A549 (cell line): ENCODE measurements at regions of chr3 and their contacts with region 1.

Region 1: DNA sequence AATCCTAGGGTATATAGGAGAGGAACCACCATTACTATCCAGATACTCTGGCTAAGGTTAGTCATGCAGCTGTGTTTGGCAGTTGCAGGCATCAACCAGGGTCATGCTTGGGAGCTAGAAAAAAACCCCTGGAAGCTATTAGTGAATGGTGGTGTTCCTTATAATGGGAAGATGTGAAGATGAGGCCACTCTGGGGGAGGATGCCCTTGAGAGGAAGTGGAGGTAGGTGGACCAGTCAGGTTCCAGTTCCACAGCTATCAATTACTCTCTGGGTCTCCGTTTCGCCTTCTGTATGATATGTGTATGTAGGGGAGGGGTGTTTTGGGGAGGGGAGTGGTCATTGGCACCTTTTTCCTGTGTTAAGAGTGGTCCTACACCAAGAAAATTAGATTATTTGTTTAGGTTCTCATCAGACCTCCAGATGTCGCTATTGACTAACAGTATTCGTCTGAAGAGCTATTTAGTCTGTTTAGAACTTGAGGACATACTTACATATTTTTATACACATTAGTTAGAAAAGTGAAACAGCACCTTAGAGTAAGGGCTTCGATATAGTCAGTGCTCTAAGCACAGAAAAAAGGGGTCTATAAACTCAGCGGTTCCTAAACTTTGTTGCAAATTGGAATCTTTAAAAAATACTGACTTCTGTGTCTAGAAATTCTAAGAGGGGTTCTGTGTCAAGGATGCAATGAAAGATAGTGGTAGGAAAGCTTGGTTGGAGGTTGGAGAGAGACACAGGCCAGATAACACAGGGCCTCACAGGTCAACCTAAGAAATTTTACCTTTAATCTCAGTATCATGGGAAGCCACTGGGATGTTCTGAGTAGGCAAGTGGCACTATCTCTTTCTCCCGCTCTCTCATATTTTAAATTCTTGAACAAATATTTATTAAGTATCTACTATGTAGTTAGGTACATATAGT is 9.1 kb upstream of the HPS3 start:
- DNase-seq: peak; percentile 73 to 80
- ATAC-seq: peak; percentile 83 to 95
- H3K4me3 ChIP-seq: no peak overlapping the region
- H3K27ac ChIP-seq: peak overlapping the region; percentile 61 to 73
- H3K4me1 ChIP-seq: peaks cover 12% of the 10 kb centered on the region
- CTCF ChIP-seq: peak; percentile 94
- EP300 ChIP-seq: no peak
- POLR2A ChIP-seq: no peak
- RAD21 ChIP-seq: peak; percentile 95 to 97

Region 2: GRCh38 chr3:148880681-148881080 is 239.6 kb before region 1 on chr3:
- CTCF ChIA-PET with region 1: no interaction called
- POLR2A ChIA-PET with region 1: no interaction called
- DNase-seq: peak; percentile 28 to 47
- ATAC-seq: peak; percentile 54 to 72; a peak in 4 of 6 replicates
- H3K4me3 ChIP-seq: no peak overlapping the region
- H3K27ac ChIP-seq: no peak overlapping the region
- H3K4me1 ChIP-seq: no peaks in the 10 kb centered on the region
- CTCF ChIP-seq: peak; percentile 29
- EP300 ChIP-seq: no peak
- POLR2A ChIP-seq: no peak
- RAD21 ChIP-seq: peak; percentile 48 to 65; a peak in 4 of 5 replicates

Region 3: GRCh38 chr3:148955544-148956346 is 164.6 kb before region 1 on chr3:
- CTCF ChIA-PET with region 1: interaction called, 16 read pairs
- POLR2A ChIA-PET with region 1: no interaction called
- DNase-seq: peak; percentile 19 to 72
- ATAC-seq: peak; percentile 76 to 88
- H3K4me3 ChIP-seq: no peak overlapping the region
- H3K27ac ChIP-seq: peak overlapping the region; percentile 7 to 53; a peak in 4 of 6 replicates
- H3K4me1 ChIP-seq: peaks cover 5% of the 10 kb centered on the region; the same call in 2 of the 3 replicates
- CTCF ChIP-seq: peak; percentile 89
- EP300 ChIP-seq: no peak
- POLR2A ChIP-seq: no peak
- RAD21 ChIP-seq: peak; percentile 89 to 93

Region 4: DNA sequence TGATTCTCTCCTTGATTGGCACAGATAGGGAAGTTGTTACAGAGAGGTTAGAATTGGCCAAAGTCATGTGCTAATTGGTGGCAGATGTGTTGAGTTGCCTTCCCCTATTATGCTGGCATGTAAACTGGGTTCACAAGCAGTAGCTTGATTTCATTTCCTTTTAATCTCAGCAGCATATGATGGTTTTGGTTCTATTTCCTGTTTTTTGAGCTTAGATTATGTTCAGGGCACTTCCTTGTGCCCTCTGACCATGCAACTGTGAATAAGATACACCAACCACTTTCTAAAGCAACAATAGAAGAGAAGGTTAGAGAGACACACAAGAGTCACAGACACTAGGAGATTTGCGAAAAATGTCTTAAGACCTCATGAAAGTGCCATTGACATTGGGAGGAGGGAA is 25.7 kb after region 1 on chr3:
- CTCF ChIA-PET with region 1: interaction called, 13 read pairs
- POLR2A ChIA-PET with region 1: no interaction called
- DNase-seq: no peak
- ATAC-seq: no peak
- H3K4me3 ChIP-seq: no peak overlapping the region
- H3K27ac ChIP-seq: no peak overlapping the region
- H3K4me1 ChIP-seq: no peaks in the 10 kb centered on the region
- CTCF ChIP-seq: no peak
- EP300 ChIP-seq: no peak
- POLR2A ChIP-seq: no peak
- RAD21 ChIP-seq: no peak

Region 5: GRCh38 chr3:149267565-149267964 is 147.3 kb after region 1 on chr3:
- CTCF ChIA-PET with region 1: interaction called, 114 read pairs
- POLR2A ChIA-PET with region 1: no interaction called
- DNase-seq: no peak
- ATAC-seq: no peak
- H3K4me3 ChIP-seq: no peak overlapping the region
- H3K27ac ChIP-seq: no peak overlapping the region
- H3K4me1 ChIP-seq: no peaks in the 10 kb centered on the region
- CTCF ChIP-seq: no peak
- EP300 ChIP-seq: no peak
- POLR2A ChIP-seq: no peak
- RAD21 ChIP-seq: no peak

Region 6: GRCh38 chr3:149299938-149300791 is 179.9 kb after region 1 on chr3:
- CTCF ChIA-PET with region 1: interaction called, 17 read pairs
- POLR2A ChIA-PET with region 1: no interaction called
- DNase-seq: peak; percentile 65 to 98
- ATAC-seq: peak; percentile 91
- H3K4me3 ChIP-seq: no peak overlapping the region
- H3K27ac ChIP-seq: peak overlapping the region; percentile 91 to 95
- H3K4me1 ChIP-seq: peaks cover 49% of the 10 kb centered on the region
- CTCF ChIP-seq: no peak
- EP300 ChIP-seq: peak; percentile 55 to 88; a peak in 3 of 5 replicates
- POLR2A ChIP-seq: no peak
- RAD21 ChIP-seq: peak in 1 of 2 experiments; percentile 46; a peak in 4 of 5 replicates

Region 7: DNA sequence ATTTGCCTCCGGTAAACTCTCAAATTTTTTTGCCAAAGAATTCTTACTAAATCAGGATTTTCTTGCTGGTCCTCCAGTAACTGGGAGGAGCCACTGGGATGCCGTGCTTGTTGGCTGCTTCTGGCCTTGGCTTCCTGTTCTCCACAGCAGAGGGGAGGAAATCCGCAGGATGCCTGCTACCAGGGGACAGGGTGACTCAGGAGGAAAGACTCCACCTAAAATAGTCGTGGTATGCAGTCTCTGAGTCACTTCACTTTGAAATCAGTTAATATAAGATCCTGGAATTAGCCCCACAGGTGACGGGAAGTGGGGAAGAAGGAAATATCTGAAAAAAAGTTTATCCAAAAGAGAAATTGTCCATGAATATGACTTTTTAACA is 219.6 kb after region 1 on chr3:
- CTCF ChIA-PET with region 1: interaction called, 29 read pairs
- POLR2A ChIA-PET with region 1: no interaction called
- DNase-seq: peak; percentile 82 to 98
- ATAC-seq: peak; percentile 99 to 100
- H3K4me3 ChIP-seq: 0 out of 3 replicates have a peak overlapping the region, but pooled peaks have one; percentile 2
- H3K27ac ChIP-seq: peak overlapping the region; percentile 88 to 93
- H3K4me1 ChIP-seq: peaks cover 52% of the 10 kb centered on the region
- CTCF ChIP-seq: no peak
- EP300 ChIP-seq: peak; percentile 92 to 95
- POLR2A ChIP-seq: no peak
- RAD21 ChIP-seq: peak; percentile 20 to 44; a peak in 3 of 5 replicates

Region 8: DNA sequence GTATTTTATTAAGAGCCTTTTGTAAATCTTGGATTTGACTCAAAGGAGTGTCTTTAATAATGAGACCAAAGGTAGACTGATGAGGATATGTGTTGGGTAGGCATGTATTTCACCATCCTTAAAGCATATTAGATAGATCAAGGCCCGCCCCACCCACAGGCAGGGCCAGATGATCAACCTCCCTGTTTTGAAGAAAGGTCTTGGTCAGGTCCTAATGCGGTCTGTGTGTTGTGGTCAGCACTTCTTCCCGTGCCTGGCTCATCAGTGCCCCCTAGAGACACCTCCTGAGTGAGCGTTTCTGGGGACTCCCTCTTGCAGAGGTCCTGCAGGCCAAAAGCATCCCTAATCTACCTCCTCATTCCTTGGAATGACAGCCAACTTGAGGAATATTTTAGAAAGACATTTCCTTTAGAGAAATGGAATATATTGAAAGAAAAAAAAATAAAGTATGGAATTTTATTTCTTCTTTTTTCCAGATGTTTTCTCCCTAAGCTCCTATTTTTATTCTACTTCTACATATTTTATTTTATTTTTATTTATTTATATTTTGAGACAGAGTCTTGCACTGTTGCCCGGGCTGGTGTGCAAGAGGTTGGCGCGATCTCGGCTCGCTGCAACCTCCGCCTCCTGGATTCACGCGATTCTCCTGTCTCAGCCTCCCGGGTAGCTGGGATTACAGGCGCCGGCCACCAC is 360.2 kb after region 1 on chr3:
- CTCF ChIA-PET with region 1: interaction called, 23 read pairs
- POLR2A ChIA-PET with region 1: no interaction called
- DNase-seq: peak; percentile 85 to 95
- ATAC-seq: peak; percentile 97 to 98
- H3K4me3 ChIP-seq: no peak overlapping the region
- H3K27ac ChIP-seq: peak overlapping the region; percentile 82 to 83
- H3K4me1 ChIP-seq: peaks cover 46% of the 10 kb centered on the region
- CTCF ChIP-seq: peak; percentile 94
- EP300 ChIP-seq: no peak
- POLR2A ChIP-seq: no peak
- RAD21 ChIP-seq: peak; percentile 99 to 100